Left colon (tissue), 2 donors: ENCODE measurements at regions of chr4 and their contacts with region 1.

Region 1: DNA sequence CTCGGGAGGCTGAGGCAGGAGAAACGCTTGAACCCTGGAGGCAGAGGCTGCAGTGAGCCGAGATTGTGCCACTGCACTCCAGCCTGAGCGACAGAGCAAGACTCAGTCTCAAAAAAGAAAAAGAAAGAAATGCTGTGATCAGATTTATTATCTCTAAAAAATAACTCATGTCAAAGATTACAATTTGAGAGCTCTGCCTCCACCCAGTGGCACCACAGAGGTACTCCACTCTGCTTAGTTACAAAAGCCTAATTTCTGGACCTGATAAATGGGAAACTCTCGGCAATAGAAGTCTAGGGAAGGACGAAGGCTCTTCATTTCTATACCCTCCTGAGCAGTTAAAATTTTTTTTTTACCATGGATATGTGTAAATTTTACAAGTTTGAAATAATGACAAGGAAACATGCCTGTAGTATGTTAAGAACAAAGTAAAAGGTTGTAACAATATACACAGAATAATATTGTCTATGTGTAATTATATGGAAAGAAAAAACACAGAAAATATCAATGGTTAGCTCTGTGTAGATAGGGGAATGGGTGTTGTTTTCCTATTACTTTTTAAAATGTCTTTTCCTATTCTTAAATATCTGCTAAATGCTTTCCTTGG is 149.8 kb downstream of the STIM2 start:
- DNase-seq: peak; percentile 40 to 55
- ATAC-seq: peak; percentile 88

Region 2: GRCh38 chr4:26459054-26459755 is 551.2 kb before region 1 on chr4:
- intact Hi-C with region 1: loop called in 1 of 2 experiments (anchors 10 kb)
- DNase-seq: no peak
- ATAC-seq: peak; percentile 78